CD4-positive, alpha-beta memory T cell (primary cell): ENCODE measurements at regions of chr12 and their contacts with region 1.

Region 1: DNA sequence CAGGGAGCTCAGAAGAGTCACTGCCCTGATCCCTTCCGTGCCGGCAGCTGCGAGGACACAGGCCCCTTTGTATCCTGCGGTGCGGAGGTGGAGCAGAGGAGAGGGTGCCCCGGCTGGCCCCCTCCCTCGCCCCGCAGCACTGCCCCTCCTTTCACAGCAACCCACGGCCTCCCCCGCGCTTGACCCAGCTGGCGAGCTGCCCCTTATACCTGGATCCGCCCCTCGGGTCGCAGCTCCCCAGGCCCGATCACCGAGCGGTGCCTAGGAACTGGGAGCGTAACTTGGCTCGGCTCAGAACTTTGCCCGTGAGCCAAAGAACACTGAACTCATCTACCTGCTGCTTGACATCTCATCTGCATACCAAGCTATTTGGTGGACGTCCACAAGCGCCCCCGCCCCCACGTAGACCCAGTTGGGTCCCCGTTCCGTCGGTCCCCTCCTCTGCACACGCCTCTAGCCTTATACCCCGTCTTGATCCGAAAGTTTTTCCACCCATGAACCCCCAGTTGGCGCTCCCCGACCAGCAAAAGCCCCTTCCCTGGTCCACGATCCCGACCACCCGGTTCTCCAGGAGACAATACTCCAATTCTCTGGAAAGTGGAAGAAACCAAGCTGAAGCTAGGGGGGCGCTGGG is 697 bp upstream of the DNAJC14 start:
- DNase-seq: peak in 4 of 5 donors; percentile 18 to 55 (median 22)
- H3K4me3 ChIP-seq: peak overlapping the region; percentile 88 to 93
- H3K4me3 Mint-ChIP-seq: peak overlapping the region; percentile 95 to 99 (median 98)
- H3K27ac ChIP-seq: peak overlapping the region; percentile 59
- H3K27ac Mint-ChIP-seq: peak overlapping the region; percentile 89 to 97 (median 95)
- H3K4me1 ChIP-seq: peaks cover 54% of the 10 kb centered on the region
- H3K4me1 Mint-ChIP-seq: peaks cover 28 to 66% (median 41%) of the 10 kb centered on the region in 4 donors
- H3K27me3 ChIP-seq: no peaks in the 10 kb centered on the region
- H3K27me3 Mint-ChIP-seq: no peaks in the 10 kb centered on the region

Region 2: GRCh38 chr12:55659486-55660385 is 170.3 kb before region 1 on chr12:
- CTCF ChIA-PET with region 1: no interaction called
- POLR2A ChIA-PET with region 1: no interaction called
- intact Hi-C with region 1: no loop called
- DNase-seq: no peak
- H3K4me3 ChIP-seq: no peak overlapping the region
- H3K4me3 Mint-ChIP-seq: no peak overlapping the region
- H3K27ac ChIP-seq: no peak overlapping the region
- H3K27ac Mint-ChIP-seq: peak overlapping the region in 1 of 7 donors; percentile 25
- H3K4me1 ChIP-seq: no peaks in the 10 kb centered on the region
- H3K4me1 Mint-ChIP-seq: peaks cover 0 to 2% (median under 1%) of the 10 kb centered on the region in 4 donors
- H3K27me3 ChIP-seq: no peaks in the 10 kb centered on the region
- H3K27me3 Mint-ChIP-seq: peaks cover 3 to 4% of the 10 kb centered on the region in 2 donors

Region 3: DNA sequence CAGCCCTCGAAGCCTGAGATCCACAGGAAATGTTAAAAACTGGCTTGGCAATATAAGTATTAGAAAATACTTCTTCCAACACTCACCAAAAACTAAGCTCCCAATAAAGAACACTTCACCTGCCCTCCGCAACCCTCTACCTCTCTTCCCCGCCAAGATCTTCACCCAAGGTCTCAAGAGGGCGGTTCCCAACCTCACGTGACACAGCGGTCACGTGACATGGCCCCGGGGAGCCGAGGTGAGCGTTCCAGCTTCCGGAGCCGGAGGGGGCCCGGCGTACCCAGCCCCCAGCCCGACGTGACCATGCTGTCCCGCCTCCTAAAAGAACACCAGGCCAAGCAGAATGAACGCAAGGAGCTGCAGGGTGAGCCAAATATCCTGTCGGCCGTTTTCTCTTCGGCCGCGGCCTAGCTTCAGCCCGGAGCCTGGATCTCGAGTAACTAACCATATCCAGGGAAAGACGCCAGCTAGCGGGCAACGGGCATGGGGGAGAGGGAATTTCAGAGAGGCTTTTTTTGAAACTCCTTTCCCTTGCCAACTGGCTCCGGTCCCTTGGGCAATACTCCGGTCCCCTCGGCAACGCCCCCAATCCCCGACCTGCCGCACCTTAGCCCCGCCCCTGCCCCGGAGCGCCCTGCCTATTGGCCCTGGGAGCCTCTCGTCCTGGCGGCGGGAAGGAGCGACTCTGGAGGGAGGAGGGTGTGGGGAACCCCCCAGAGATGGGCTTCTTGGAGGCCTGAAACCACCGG is 114.1 kb before region 1 on chr12 and contains the start of gene BLOC1S1:
- CTCF ChIA-PET with region 1: interaction called, 3 read pairs
- POLR2A ChIA-PET with region 1: interaction called, 4 read pairs
- intact Hi-C with region 1: loop called (anchors 1 kb)
- DNase-seq: peak; percentile 88 to 94 (median 90)
- H3K4me3 ChIP-seq: peak within 1 kb of the TSS; percentile 84 to 99
- H3K4me3 Mint-ChIP-seq: peak within 1 kb of the TSS; percentile 90 to 99 (median 94)
- H3K27ac ChIP-seq: peak within 1 kb of the TSS; percentile 91
- H3K27ac Mint-ChIP-seq: peak within 1 kb of the TSS; percentile 94 to 99 (median 98)
- H3K4me1 ChIP-seq: peaks cover 39% of the 10 kb centered on the region
- H3K4me1 Mint-ChIP-seq: peaks cover 18 to 50% (median 36%) of the 10 kb centered on the region in 4 donors
- H3K27me3 ChIP-seq: no peaks in the 10 kb centered on the region
- H3K27me3 Mint-ChIP-seq: peaks cover 0 to 1% of the 10 kb centered on the region in 2 donors
- total RNA-seq, gene BLOC1S1: 80.3 to 87.0 TPM

Region 4: GRCh38 chr12:55926738-55927587 is 96.9 kb after region 1 on chr12:
- CTCF ChIA-PET with region 1: interaction called, 13 read pairs
- POLR2A ChIA-PET with region 1: interaction called, 136 read pairs
- intact Hi-C with region 1: loop called (anchors 1 kb)
- DNase-seq: peak; percentile 83 to 91 (median 85)
- H3K4me3 ChIP-seq: peak overlapping the region; percentile 95 to 100
- H3K4me3 Mint-ChIP-seq: peak overlapping the region; percentile 97 to 100 (median 99)
- H3K27ac ChIP-seq: peak overlapping the region; percentile 88
- H3K27ac Mint-ChIP-seq: peak overlapping the region; percentile 92 to 99 (median 96)
- H3K4me1 ChIP-seq: peaks cover 51% of the 10 kb centered on the region
- H3K4me1 Mint-ChIP-seq: peaks cover 36 to 79% (median 46%) of the 10 kb centered on the region in 4 donors
- H3K27me3 ChIP-seq: no peaks in the 10 kb centered on the region
- H3K27me3 Mint-ChIP-seq: no peaks in the 10 kb centered on the region

Region 5: DNA sequence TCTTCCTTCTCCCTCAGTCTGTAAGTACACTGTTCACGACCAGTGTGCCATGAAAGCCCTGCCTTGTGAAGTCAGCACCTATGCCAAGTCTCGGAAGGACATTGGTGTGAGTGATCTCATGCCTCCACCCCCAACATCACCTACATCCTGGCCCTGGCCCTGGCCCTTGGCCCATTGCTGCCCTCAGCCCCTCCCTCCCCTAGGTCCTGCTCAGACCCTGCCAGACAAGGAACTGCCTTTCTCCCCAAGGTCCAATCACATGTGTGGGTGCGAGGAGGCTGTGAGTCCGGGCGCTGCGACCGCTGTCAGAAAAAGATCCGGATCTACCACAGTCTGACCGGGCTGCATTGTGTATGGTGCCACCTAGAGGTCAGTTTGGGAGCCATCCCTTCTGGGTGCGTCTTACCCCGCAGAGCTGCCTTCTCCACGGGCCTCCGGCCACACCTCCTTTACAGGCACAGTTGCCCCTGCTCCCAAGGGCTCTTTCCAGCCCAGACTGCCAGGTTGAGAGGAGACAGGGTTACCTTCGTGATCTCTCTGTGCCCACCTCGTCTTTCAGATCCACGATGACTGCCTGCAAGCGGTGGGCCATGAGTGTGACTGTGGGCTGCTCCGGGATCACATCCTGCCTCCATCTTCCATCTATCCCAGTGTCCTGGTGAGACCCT is 110.1 kb after region 1 on chr12:
- CTCF ChIA-PET with region 1: interaction called, 13 read pairs
- POLR2A ChIA-PET with region 1: interaction called, 59 read pairs
- intact Hi-C with region 1: no loop called
- DNase-seq: peak; percentile 83 to 86 (median 84)
- H3K4me3 ChIP-seq: peak overlapping the region in 1 of 2 donors; percentile 4
- H3K4me3 Mint-ChIP-seq: peak overlapping the region in 7 of 8 donors; percentile 32 to 76 (median 62)
- H3K27ac ChIP-seq: peak overlapping the region; percentile 48
- H3K27ac Mint-ChIP-seq: peak overlapping the region; percentile 82 to 96 (median 92)
- H3K4me1 ChIP-seq: peaks cover 66% of the 10 kb centered on the region
- H3K4me1 Mint-ChIP-seq: peaks cover 56 to 89% (median 66%) of the 10 kb centered on the region in 4 donors
- H3K27me3 ChIP-seq: no peaks in the 10 kb centered on the region
- H3K27me3 Mint-ChIP-seq: no peaks in the 10 kb centered on the region

Region 6: DNA sequence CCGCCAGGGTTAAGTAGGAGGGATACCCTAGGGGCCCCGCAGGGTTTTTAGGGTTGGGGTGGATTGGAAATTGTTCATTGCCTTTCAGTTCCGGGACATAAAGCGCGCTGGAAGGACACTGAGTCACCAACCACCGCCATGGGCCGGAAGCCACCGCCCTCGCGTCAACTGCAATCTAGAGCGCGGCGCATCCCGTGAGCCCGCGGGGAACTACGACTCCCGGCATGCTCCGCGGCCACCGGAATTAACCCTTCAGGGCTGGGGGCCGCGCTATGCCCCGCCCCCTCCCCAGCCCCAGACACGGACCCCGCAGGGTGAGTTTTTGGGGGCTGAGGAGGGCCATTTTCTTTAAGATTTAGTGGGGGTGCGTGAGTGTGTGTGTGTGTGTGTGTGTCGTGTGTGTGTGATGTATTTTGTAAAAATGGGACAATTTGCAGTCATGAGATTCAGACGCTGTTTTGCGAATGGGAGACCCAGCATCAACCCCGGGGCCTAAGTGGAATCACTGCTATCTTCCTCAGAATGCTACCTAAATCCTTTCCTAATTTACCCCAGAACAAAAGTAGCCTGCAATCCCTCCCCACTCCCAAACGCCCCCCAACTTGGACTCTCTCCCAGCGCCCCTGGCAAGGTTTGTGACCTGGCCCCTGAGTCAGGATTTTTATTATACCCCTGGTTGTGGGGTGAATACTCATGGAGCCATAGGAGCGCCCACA is 322.4 kb after region 1 on chr12 and contains the start of gene MYL6B:
- CTCF ChIA-PET with region 1: no interaction called
- POLR2A ChIA-PET with region 1: interaction called, 3 read pairs
- intact Hi-C with region 1: loop called (anchors 1 kb)
- DNase-seq: peak; percentile 87 to 94 (median 88)
- H3K4me3 ChIP-seq: peak within 1 kb of the TSS; percentile 66 to 91
- H3K4me3 Mint-ChIP-seq: peak within 1 kb of the TSS; percentile 91 to 96 (median 94)
- H3K27ac ChIP-seq: peak within 1 kb of the TSS; percentile 84
- H3K27ac Mint-ChIP-seq: peak within 1 kb of the TSS; percentile 93 to 99 (median 97)
- H3K4me1 ChIP-seq: peaks cover 35% of the 10 kb centered on the region
- H3K4me1 Mint-ChIP-seq: peaks cover 16 to 49% (median 28%) of the 10 kb centered on the region in 4 donors
- H3K27me3 ChIP-seq: no peaks in the 10 kb centered on the region
- H3K27me3 Mint-ChIP-seq: no peaks in the 10 kb centered on the region
- total RNA-seq, gene MYL6B: 2.6 to 3.4 TPM